Body of pancreas (tissue), 4 donors: ENCODE measurements at regions of chr3 and their contacts with region 1.

Region 1: GRCh38 chr3:53035825-53036619 is 9.9 kb downstream of the SFMBT1 start:
- DNase-seq: no peak
- ATAC-seq: no peak
- H3K4me3 ChIP-seq: no peak overlapping the region
- H3K27ac ChIP-seq: no peak overlapping the region
- H3K4me1 ChIP-seq: peaks cover 41% of the 10 kb centered on the region
- H3K27me3 ChIP-seq: no peaks in the 10 kb centered on the region
- CTCF ChIP-seq: no peak
- POLR2A ChIP-seq: no peak

Region 2: DNA sequence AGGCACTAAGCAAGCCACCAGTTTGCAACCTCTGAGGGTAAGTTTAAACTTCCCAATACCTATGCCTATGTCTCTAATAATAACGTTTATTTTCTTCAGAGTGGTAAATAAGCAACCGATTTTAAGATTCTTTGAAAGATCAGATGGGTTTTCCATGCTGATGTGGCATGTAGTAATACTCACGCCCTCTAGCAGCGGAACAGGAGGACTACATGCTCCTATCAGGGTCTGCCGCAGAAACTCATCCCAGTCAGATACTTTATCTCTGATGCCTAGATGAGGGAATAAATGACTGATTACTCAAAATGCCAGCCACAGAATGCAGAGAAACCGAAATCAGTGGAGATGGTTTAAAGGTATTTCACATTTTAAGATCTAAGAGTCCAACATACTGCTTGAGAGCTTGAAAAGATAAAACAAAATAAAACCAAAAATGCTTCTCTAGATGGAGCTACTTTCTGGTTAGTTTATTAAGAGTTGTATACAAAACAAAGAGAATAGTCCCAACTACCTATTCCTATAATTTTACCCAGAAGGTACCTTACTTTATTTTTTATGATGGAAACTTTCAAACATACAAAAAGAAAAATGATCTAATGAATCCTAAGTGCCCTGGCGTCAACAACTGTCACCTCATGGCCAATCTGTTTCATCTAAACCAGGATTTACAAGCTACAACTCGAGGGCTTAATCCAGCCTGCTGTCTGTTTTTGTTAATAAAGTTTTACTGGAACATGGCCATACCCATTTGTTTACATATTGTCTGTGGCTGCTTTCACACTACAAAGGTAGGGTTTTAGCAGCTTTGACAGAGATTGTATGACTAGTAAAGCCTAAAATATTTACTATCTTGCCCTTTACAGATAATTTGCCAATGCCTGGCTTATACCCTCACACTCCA is 101.1 kb before region 1 on chr3:
- intact Hi-C with region 1: loop called (anchors 2 kb)
- DNase-seq: peak; percentile 40 to 62 (median 58)
- ATAC-seq: peak; percentile 81
- H3K4me3 ChIP-seq: no peak overlapping the region
- H3K27ac ChIP-seq: no peak overlapping the region
- H3K4me1 ChIP-seq: peaks cover 4% of the 10 kb centered on the region
- H3K27me3 ChIP-seq: no peaks in the 10 kb centered on the region
- CTCF ChIP-seq: peak; percentile 23 to 78 (median 69)
- POLR2A ChIP-seq: no peak